Activated naive CD4-positive, alpha-beta T cell treated with anti-CD3 and anti-CD28 coated beads for 36 hours (primary cell): ENCODE measurements at regions of chr3 and their contacts with region 1.

Region 1: DNA sequence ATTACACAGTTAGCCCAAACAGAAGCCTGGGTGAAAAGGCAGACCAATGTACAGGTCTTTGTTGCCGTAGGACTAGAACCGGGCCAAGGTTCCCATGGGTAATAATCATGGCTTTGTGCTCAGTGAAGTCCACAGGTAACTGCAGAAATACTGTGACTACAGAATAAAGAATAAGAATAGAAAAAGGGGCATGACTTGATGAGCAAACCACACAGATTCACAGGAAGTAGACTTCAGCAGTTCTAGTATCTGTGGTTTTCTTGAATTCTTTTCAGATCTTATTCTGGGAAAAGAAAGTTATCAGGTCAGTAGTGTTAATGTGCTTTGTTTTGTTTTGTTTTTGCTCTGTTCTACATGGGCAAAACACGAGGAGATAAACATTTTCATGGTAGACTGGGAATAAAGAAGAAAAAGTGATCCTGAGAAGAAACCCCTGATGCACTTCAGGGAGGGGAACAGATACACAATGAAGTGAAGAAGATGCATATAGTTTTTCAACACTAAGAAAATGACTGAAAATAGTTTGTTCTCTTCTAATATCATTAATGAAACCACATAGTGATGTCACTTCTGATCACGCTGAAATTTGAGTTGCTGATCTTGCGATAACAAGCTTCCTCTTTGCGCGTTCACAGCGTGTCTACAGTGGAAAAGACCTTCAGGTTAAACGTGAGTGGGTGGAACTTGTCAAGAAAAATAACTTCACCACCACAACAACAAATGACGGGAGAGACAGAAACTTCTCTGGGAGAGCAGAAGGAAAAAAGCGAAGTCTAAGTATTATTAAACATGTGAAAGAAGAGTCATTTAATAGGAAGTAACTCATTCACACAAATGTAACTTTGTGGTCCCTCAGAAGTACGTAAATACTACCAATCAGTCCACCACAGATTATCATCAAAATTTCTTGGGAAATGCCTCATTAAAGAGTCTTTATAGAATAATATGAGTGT is 315.8 kb upstream of the SATB1 start:
- DNase-seq: peak; percentile 77
- H3K4me3 Mint-ChIP-seq: peak overlapping the region; percentile 63
- H3K27ac Mint-ChIP-seq: peak overlapping the region; percentile 97
- H3K4me1 Mint-ChIP-seq: peaks cover 88% of the 10 kb centered on the region
- H3K27me3 Mint-ChIP-seq: no peaks in the 10 kb centered on the region

Region 2: DNA sequence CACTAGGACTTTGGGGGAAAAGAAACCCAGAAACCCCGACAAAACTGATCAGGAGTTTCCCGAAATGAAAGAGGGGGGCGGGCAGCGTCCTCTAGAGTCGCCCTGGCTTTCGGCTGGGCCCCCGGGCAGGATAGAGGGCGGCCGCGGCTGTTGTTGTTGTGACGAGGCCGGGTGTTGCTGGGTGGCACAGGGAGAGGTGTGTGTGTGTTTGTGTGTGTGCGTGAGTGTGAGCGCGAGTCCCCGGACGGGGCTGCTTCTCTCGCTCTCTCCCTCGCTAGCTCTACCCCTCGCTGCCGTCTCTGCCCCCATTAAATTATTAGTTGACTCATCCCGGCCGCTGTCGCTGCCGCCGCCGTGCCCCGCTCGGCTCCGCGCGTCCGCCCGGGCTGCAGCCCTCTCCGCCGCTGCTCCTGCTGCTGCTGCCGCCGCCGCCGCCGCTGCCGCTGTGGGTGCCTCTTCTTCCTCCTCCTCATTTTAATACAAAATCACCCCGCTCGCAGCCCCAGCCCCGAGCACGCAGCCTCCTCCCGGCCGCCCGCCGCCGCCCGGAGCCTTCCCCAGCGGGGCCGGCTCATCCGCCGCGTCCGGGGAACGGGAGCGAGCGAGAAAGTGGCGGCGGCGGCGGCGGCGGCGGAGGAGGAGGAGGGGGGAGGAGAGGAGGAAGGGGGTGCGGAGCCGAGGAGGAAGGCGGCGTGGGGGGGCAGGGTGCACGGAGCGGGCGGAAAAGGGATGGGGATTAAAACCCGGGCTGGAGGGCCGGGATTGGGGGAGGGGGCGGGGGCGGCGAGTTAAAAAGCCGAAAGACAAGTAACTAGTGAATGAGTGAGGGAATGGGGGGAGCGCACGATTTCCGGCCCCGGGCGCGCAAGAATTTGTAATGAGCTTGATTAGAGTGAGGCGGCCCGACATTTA is 315.9 kb before region 1 on chr3 and contains the start of gene SATB1:
- CTCF ChIA-PET with region 1: no interaction called
- intact Hi-C with region 1: loop called (anchors 5 kb)
- DNase-seq: peak; percentile 84
- H3K4me3 Mint-ChIP-seq: peak within 1 kb of the TSS; percentile 86
- H3K27ac Mint-ChIP-seq: peak within 1 kb of the TSS; percentile 98
- H3K4me1 Mint-ChIP-seq: peaks cover 73% of the 10 kb centered on the region
- H3K27me3 Mint-ChIP-seq: no peaks in the 10 kb centered on the region
- total RNA-seq, gene SATB1: 303 to 305 TPM

Region 3: GRCh38 chr3:18499301-18499700 is 241.6 kb before region 1 on chr3:
- CTCF ChIA-PET with region 1: no interaction called
- intact Hi-C with region 1: loop called (anchors 1 kb)
- DNase-seq: peak; percentile 42
- H3K4me3 Mint-ChIP-seq: peak overlapping the region; percentile 46
- H3K27ac Mint-ChIP-seq: peak overlapping the region; percentile 83
- H3K4me1 Mint-ChIP-seq: peaks cover 41% of the 10 kb centered on the region
- H3K27me3 Mint-ChIP-seq: no peaks in the 10 kb centered on the region

Region 4: GRCh38 chr3:18649666-18650363 is 91.1 kb before region 1 on chr3:
- CTCF ChIA-PET with region 1: interaction called, 4 read pairs
- intact Hi-C with region 1: loop called (anchors 1 kb)
- DNase-seq: peak; percentile 87
- H3K4me3 Mint-ChIP-seq: no peak overlapping the region
- H3K27ac Mint-ChIP-seq: peak overlapping the region; percentile 92
- H3K4me1 Mint-ChIP-seq: peaks cover 74% of the 10 kb centered on the region
- H3K27me3 Mint-ChIP-seq: no peaks in the 10 kb centered on the region

Region 5: DNA sequence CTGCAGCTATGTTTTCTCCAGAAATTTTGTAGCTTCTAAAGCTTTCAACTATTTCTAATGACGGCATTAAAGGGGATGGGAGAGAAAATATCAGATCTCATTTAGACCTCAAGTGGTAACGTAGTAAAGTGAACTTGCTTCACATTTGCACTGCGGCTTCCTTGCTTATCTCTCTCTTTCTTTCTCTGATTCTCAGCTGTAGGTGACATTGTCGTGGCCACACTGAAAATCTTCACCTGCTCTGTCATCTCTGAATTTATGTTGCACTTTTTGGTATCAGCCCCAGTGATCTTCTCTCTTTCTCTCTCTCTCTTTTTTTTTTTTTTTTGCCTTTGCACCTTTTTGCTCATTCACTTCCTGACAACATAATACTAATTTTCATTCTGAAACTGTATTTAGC is 61.7 kb before region 1 on chr3:
- CTCF ChIA-PET with region 1: interaction called, 6 read pairs
- intact Hi-C with region 1: loop called (anchors 1 kb)
- DNase-seq: peak; percentile 77
- H3K4me3 Mint-ChIP-seq: peak overlapping the region; percentile 31
- H3K27ac Mint-ChIP-seq: peak overlapping the region; percentile 81
- H3K4me1 Mint-ChIP-seq: peaks cover 81% of the 10 kb centered on the region
- H3K27me3 Mint-ChIP-seq: no peaks in the 10 kb centered on the region

Region 6: GRCh38 chr3:18725668-18726407 is 15.1 kb before region 1 on chr3:
- CTCF ChIA-PET with region 1: interaction called, 10 read pairs
- intact Hi-C with region 1: loop called (anchors 1 kb)
- DNase-seq: peak; percentile 50
- H3K4me3 Mint-ChIP-seq: peak overlapping the region; percentile 54
- H3K27ac Mint-ChIP-seq: peak overlapping the region; percentile 86
- H3K4me1 Mint-ChIP-seq: peaks cover 71% of the 10 kb centered on the region
- H3K27me3 Mint-ChIP-seq: no peaks in the 10 kb centered on the region

Region 7: GRCh38 chr3:18766974-18767373 is 26.1 kb after region 1 on chr3:
- CTCF ChIA-PET with region 1: no interaction called
- intact Hi-C with region 1: no loop called
- DNase-seq: no peak
- H3K4me3 Mint-ChIP-seq: no peak overlapping the region
- H3K27ac Mint-ChIP-seq: no peak overlapping the region
- H3K4me1 Mint-ChIP-seq: peaks cover 24% of the 10 kb centered on the region
- H3K27me3 Mint-ChIP-seq: no peaks in the 10 kb centered on the region

Region 8: GRCh38 chr3:19946832-19947548 is 1206.1 kb after region 1 on chr3 and contains the start of gene RAB5A:
- CTCF ChIA-PET with region 1: no interaction called
- intact Hi-C with region 1: loop called (anchors 2 kb)
- DNase-seq: peak; percentile 98
- H3K4me3 Mint-ChIP-seq: peak within 1 kb of the TSS; percentile 100
- H3K27ac Mint-ChIP-seq: peak within 1 kb of the TSS; percentile 100
- H3K4me1 Mint-ChIP-seq: peaks cover 43% of the 10 kb centered on the region
- H3K27me3 Mint-ChIP-seq: no peaks in the 10 kb centered on the region
- total RNA-seq, gene RAB5A: 46.4 to 47.5 TPM